Colonic mucosa (tissue), 4 donors: ENCODE measurements at regions of chr1 and their contacts with region 1.

Region 1: DNA sequence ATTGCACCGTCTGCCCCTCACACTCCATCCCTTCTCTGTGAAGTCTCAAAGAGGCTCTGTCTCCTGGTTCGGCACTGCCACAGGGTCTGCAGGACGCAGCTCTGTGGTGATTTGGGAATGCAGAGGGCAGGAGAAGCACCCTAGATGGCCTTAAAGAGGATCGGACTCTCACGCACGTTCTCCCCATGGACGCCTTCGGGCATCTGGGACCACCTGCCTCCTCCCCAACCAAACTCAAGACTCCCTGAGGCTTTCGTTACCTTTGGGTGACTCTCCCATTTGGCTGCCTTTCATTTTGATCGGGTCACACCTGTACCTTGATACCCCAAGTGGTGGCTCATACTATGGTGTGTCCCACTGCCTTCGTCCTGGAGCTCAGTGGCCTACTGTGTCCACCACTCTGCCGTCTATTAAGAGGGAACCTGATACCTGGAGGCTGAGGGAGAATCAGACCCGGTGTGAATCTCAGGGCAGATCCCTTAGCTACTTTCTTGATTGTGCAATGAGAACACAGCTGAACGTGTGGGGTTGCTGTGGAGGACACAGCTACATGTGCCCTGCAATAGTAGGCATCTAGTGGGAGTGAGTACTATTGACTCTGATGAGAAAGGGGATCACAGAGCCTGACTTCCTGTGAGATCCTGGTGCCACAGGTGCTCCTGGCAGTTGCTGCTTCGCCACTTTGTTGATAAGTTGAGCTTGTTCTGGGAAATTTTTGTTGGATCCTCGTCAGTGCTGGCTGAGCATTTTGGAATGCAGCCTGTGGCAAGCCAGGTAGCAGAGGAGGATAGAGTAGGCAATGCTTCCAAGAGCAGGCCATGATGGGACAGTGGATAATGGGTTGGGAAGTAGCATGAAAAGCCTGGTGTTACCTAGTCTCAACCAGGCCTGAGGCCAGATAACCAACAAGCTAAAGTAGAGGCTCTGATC is 28.4 kb upstream of the MPZL1 start:
- DNase-seq: no peak
- H3K4me3 ChIP-seq: no peak overlapping the region
- H3K27ac ChIP-seq: no peak overlapping the region
- H3K4me1 ChIP-seq: no peaks in the 10 kb centered on the region
- H3K27me3 ChIP-seq: no peaks in the 10 kb centered on the region
- CTCF ChIP-seq: no peak

Region 2: DNA sequence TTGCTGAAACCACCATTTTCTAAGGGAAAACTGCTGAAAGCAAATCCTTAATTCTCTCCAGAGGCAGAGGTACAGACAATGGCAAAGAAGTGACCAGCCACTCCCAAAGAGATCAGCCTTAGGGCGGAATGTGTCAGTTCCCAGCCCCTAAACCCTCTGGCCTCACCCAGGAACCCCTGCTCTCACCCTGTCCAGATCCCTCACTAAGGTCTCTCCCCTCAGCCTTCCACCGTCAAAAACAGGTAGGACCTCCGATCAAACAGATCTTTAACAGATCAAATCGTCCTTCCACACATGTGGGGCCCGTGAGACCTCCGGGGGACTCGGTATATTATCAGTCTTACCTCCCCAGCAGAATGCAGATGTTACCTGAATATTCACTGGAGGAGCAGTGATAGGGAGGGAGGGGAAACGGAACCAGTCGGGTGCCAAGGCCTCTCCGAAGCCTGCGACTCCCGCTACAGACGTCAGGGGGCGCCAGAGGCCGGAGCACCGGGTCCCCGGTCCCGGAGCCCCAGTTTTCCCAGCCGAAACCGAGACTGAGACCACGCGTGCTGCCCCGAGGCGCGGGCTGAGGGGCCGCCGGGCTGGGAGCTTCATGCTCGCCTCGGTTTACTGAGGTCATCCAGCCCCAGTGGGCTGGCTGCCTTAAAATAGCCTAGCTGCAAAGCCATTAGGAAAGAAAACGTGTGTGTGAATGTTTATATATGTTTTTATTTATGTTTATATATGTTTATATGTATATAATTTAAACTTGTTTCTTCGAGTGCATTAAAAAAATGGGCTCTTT is 626.9 kb before region 1 on chr1:
- intact Hi-C with region 1: no loop called
- DNase-seq: peak; percentile 86
- H3K4me3 ChIP-seq: no peak overlapping the region
- H3K27ac ChIP-seq: peak overlapping the region; percentile 66
- H3K4me1 ChIP-seq: peaks cover 8% of the 10 kb centered on the region
- H3K27me3 ChIP-seq: no peaks in the 10 kb centered on the region
- CTCF ChIP-seq: peak; percentile 98

Region 3: GRCh38 chr1:167563579-167564246 is 129.7 kb before region 1 on chr1:
- intact Hi-C with region 1: loop called (anchors 5 kb)
- DNase-seq: no peak
- H3K4me3 ChIP-seq: no peak overlapping the region
- H3K27ac ChIP-seq: no peak overlapping the region
- H3K4me1 ChIP-seq: no peaks in the 10 kb centered on the region
- H3K27me3 ChIP-seq: no peaks in the 10 kb centered on the region
- CTCF ChIP-seq: no peak

Region 4: GRCh38 chr1:167627865-167628641 is 65.3 kb before region 1 on chr1:
- intact Hi-C with region 1: no loop called
- DNase-seq: no peak
- H3K4me3 ChIP-seq: no peak overlapping the region
- H3K27ac ChIP-seq: peak overlapping the region; percentile 88
- H3K4me1 ChIP-seq: no peaks in the 10 kb centered on the region
- H3K27me3 ChIP-seq: no peaks in the 10 kb centered on the region
- CTCF ChIP-seq: no peak